ENCODE measurements at regions of chr10 and their contacts with region 1.

Region 1: DNA sequence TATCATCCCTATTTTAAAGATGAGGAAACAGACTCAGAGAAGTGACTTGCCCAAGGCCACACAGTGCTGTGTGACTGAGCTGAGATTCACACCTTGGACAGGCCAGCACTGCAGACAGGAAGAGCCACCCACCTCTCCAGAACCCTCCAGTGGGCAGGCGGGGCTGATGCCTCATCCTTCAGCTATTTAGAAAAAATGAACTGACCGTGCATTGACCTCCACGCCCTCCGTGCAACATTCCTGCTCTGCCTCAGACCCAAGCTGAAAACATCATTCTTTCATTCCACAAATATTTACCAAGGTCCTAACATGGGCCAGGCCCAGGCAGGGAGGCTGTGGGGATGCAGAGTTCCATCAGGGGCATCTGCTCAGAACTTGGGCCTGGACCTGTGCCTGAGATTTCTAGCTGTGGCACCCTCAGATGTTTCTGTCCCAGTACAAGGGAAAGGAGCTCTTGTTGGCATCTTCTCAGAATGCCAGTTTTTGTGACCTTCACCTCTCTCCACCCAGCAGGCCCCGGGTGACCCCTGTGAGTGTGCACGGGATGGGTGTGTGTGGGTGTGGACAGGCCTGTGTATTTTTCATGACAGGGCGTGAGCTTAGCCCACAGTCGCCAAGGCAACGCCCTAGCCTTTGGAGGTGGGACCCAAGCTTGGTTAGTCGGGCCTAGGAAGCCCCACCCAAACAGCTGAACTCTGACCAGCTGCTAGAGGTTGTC is 6.5 kb downstream of the VSIR start:
- DNase-seq: no peak
- H3K4me3 ChIP-seq: no peak overlapping the region
- H3K27ac ChIP-seq: no peak overlapping the region
- H3K4me1 ChIP-seq: no peaks in the 10 kb centered on the region; a peak in 1 of 7 replicates
- H3K27me3 ChIP-seq: peaks cover 0 to 2% (median under 1%) of the 10 kb centered on the region in 4 experiments; a peak in 1 of 7 replicates
- CTCF ChIP-seq: no peak
- EP300 ChIP-seq: no peak
- POLR2A ChIP-seq: no peak
- RAD21 ChIP-seq: no peak

Region 2: GRCh38 chr10:71748671-71749191 is 18.1 kb before region 1 on chr10:
- CTCF ChIA-PET with region 1: interaction called, 11 read pairs
- POLR2A ChIA-PET with region 1: interaction called, 3 read pairs
- DNase-seq: no peak
- H3K4me3 ChIP-seq: no peak overlapping the region
- H3K27ac ChIP-seq: no peak overlapping the region
- H3K4me1 ChIP-seq: peaks cover 1 to 8% (median 4%) of the 10 kb centered on the region in 4 experiments; a peak in 5 of 7 replicates
- H3K27me3 ChIP-seq: 0 out of 7 replicates have a peak, but pooled peaks cover 0 to 2% (median 0%) of the 10 kb centered on the region in 4 experiments
- CTCF ChIP-seq: peak in 2 of 3 experiments; percentile 12; a peak in 1 of 4 replicates
- EP300 ChIP-seq: no peak
- POLR2A ChIP-seq: no peak
- RAD21 ChIP-seq: no peak

Region 3: DNA sequence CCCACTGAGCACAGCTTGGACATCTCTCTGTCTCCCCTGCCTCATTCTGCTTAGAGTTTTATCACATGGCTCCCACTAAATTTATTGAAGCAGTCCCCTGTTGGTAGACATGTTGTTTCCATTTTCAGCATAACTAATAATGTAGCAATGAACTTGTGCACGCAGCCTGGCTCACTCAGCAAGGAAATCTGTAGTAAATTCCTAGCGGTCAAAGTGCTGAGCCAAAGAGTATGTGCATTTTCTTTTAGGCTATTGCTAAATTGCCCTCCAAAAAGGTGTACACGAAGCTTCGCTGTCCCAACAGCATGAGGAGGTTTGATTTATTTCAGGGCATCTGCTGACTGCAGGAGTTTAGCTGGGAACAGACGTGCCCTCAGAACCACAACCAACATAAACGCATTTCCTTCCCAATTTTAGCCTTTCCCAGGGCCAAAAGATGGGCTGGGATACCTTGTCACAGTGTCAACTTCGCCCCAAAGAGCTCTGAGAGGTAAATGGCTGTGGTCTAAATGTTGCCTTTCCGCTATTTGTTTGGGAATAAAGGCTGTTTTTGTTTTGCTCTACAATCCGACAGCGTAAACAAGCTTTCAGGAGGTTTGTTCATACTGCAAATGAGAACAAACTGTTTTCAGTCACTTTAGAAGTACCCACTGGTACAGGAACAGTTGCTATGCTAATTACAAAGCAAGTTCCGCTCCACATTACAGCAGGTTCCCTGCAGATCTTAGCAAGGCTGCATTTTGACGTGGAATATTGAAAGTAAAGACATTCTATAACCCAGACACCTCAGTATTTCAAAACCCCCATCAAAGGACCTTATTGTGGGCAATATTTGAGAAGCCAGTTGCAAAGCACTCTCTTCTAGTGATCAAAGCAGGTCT is 10.3 kb before region 1 on chr10:
- CTCF ChIA-PET with region 1: interaction called, 24 read pairs
- POLR2A ChIA-PET with region 1: interaction called, 3 read pairs
- DNase-seq: no peak
- H3K4me3 ChIP-seq: no peak overlapping the region
- H3K27ac ChIP-seq: no peak overlapping the region
- H3K4me1 ChIP-seq: peaks cover 0 to 7% (median 4%) of the 10 kb centered on the region in 4 experiments; a peak in 5 of 7 replicates
- H3K27me3 ChIP-seq: no peaks in the 10 kb centered on the region; a peak in 3 of 7 replicates
- CTCF ChIP-seq: no peak
- EP300 ChIP-seq: no peak
- POLR2A ChIP-seq: no peak
- RAD21 ChIP-seq: no peak

Measured in H1 (cell line).